Sciatic nerve (tissue), 2 donors: ENCODE measurements at regions of chr10 and their contacts with region 1.

Region 1: GRCh38 chr10:130863044-130863443 is 448.5 kb downstream of the TCERG1L start:
- DNase-seq: no peak
- ATAC-seq: no peak

Region 2: DNA sequence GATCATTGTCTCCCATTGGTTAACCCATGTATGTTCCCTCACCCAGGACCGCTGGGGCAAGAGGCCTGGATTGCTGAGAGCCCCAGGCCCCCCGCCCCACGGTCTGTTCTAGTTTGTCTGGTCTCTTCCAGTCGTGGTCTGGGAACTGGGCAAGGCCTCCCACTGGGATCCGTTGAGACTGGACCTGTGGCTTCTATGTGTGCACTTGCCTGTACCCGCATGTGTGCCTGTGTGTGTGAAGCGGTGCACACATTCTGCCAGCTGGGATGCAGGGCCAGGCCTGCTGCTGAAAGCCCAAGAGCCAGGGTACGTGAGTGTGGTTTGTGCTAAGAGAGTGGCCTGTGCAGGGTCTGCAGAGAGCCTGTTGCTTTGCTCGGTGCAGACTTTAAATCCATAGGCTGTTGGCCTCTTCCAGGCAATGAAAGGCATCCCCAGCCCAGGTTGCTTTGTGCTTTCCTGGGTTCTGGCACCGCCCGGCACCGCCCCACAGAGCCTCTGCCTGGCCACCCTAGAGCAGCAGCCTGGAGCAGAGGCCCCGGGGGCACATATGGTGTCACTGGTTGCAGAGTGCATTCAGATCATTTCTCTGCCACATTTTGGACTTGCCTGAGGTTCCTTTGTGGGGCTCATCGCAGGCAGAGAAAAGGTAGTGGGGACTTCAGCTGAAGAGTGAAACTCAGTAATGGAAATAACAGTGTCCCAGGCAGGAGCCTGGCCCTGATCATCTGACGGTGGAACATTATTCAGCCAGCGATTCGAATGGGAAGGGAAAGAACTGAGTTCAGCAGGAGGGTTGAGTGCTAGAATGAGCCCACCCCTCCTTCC is 511.4 kb before region 1 on chr10:
- intact Hi-C with region 1: no loop called
- DNase-seq: peak; percentile 33
- ATAC-seq: no peak

Region 3: DNA sequence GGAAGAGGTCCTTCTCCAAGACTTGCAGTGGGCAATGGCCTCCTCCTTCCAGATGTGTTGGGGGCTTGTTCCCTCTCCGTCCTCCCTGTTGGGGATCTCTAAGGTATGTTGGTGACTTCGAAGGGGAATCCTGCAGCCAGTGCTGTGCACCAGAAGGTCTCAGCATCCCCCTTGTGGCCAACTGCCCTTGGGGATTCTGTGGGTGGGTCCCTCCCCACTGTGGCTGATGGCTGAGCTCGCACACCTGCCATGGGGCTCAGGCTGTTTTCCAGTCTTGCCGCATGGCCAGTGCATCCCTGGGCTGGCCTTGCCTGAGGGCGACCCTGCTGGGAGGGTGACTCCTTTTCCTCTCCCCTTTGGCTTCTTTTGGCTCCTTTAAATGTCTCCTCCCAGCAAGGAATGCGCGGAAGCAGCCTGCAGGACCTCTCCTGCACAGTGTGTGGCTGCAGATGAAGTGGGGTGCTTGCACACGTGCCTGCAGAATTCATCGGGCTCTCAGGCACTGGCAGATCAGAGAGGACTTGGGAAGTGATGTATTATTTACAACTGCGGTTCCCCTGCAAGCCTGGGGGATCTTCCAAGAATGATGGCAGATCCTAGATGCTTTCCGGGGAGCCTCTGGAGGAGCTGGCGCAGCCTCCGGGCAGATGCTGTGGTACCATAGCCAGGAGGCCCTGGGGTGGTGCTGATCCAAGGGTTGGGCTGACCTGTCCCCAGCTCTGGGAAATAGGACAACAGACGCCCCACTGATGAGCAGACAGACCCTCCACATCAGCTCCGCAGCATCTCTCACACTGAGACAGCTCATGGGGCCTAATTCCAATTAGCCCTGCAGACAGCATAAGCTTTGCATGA is 38.5 kb after region 1 on chr10:
- intact Hi-C with region 1: loop called (anchors 1 kb)
- DNase-seq: no peak
- ATAC-seq: no peak

Region 4: GRCh38 chr10:130941886-130942285 is 78.8 kb after region 1 on chr10:
- intact Hi-C with region 1: no loop called
- DNase-seq: no peak
- ATAC-seq: no peak